ENCODE measurements at regions of chr5 and their contacts with region 1.

Region 1: DNA sequence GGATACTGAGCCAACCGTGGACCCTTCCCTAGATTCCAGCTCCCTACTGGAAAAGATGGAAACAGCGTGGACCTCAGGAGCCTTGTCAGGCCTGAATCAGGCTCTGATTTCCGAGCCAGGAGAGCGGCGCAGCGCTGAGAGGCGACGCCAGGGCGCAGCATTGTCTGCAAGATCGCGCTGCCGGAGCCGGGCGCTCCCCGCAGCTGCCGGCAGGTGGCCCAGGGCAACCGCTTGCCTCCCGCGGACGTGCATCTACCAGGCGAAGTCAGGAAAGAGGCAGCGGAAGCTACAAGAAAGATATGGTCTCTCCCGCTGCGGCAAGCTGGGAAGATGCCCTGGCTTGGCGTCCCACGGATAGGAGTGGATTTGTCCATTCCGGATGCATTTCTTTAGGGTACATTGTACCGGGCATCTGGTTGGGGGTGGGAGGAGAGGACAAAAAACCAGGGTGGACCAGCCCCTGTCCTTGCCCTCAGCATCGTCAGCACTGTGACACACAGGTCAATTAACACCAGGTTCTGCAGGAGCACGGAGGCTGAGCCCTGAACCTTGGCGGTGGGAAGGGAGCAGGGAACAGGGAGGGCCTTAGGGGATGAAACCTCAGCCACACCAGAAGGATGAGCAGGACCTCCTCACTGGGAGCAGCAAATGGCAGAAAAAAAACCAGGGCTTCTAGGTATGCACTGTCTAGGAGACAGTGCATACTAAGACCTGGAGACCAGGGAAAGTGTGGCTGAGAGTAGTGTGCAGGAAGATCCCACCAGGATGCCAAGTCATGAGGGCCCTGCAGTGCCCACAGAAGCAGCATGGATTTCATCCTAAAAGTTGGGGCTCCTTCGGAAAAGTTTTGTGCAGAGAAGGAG is 55.9 kb downstream of the SFXN1 start:
- DNase-seq: peak; percentile 77 to 82 (median 81)
- H3K4me3 ChIP-seq: peak overlapping the region in 1 of 2 donors; percentile 14
- H3K4me3 Mint-ChIP-seq: peak overlapping the region; percentile 65 to 77 (median 69)
- H3K27ac ChIP-seq: no peak overlapping the region
- H3K27ac Mint-ChIP-seq: peak overlapping the region in 6 of 7 donors; percentile 9 to 85 (median 46)
- H3K4me1 ChIP-seq: peaks cover 14% of the 10 kb centered on the region
- H3K4me1 Mint-ChIP-seq: peaks cover 9 to 24% (median 19%) of the 10 kb centered on the region in 4 donors
- H3K27me3 ChIP-seq: no peaks in the 10 kb centered on the region
- H3K27me3 Mint-ChIP-seq: no peaks in the 10 kb centered on the region

Region 2: DNA sequence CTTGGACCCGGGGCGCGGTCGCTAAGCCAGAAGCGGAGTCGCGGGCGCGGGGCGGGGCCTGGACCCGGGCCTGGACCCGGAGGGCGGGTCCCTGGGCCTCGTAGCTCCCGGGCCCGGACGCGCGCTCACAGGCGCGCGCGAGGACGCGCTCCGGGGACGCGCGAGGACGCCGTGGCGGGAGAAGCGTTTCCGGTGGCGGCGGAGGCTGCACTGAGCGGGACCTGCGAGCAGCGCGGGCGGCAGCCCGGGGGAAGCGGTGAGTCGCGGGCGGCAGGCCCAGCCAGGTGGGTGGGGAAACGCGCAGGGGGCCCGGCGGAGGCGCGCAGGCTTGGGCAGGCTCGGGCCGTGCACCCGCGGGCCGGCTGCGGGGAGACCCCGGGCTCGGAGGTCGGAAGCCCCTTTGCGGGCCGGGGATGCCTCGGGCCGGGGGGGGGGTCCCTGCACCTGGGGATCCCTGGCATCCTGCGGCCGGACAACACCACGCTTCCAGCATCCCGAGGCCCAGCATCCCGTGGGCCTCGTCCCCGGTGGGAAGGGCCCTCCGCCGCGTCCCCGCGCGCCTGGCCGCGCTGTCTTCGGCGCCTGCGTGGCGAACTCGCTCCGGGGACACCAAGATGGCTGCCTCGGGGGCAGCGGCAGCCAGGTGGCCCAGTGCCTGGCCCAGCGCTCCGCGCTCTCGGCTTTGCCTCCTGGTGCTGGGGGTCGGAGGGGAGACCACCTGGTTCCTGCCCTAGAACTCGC is 55.7 kb before region 1 on chr5 and contains the start of gene SFXN1:
- CTCF ChIA-PET with region 1: interaction called, 12 read pairs
- POLR2A ChIA-PET with region 1: interaction called, 3 read pairs
- intact Hi-C with region 1: no loop called
- DNase-seq: peak; percentile 69 to 80 (median 74)
- H3K4me3 ChIP-seq: peak within 1 kb of the TSS; percentile 65 to 84
- H3K4me3 Mint-ChIP-seq: peak within 1 kb of the TSS; percentile 92 to 98 (median 96)
- H3K27ac ChIP-seq: peak within 1 kb of the TSS; percentile 60
- H3K27ac Mint-ChIP-seq: peak within 1 kb of the TSS; percentile 89 to 98 (median 93)
- H3K4me1 ChIP-seq: peaks cover 47% of the 10 kb centered on the region
- H3K4me1 Mint-ChIP-seq: peaks cover 42 to 67% (median 52%) of the 10 kb centered on the region in 4 donors
- H3K27me3 ChIP-seq: no peaks in the 10 kb centered on the region
- H3K27me3 Mint-ChIP-seq: no peaks in the 10 kb centered on the region
- total RNA-seq, gene SFXN1: 99.2 to 111 TPM

Region 3: DNA sequence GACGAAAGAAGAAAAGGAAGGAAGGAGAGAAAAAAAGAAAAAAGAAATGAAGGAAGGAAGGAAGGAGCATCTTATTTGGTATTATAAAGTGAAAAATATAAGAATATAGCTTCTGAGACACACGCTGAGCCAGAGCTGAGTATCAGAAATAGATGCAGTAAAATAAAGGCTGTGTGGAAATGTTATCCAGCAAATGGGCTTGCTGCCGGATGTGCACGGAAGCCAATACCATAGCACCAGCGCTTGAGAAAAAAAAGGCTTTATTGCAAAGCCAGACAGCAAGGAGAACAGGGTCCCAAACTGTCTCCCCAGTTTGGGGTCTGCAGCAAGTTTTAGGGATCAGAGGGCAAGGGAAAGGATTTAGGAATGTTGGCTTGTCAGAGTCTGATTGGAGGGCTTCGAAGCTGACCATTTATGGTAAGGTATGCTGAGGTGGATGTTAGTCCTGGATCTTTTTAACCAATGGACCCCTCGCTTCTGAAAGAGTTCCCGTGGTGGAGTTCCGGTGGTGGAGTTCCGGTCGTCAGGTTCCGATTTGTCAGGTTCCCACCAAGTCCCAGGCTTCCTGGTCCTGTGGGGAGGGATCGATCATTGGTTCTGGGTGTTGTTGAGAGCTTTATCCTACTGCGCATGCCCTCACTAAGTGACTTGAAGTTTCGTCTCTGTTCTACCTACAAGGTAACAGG is 14.5 kb after region 1 on chr5:
- CTCF ChIA-PET with region 1: interaction called, 10 read pairs
- POLR2A ChIA-PET with region 1: no interaction called
- intact Hi-C with region 1: no loop called
- DNase-seq: no peak
- H3K4me3 ChIP-seq: no peak overlapping the region
- H3K4me3 Mint-ChIP-seq: no peak overlapping the region
- H3K27ac ChIP-seq: no peak overlapping the region
- H3K27ac Mint-ChIP-seq: no peak overlapping the region
- H3K4me1 ChIP-seq: no peaks in the 10 kb centered on the region
- H3K4me1 Mint-ChIP-seq: peaks cover 0 to 4% (median 0%) of the 10 kb centered on the region in 4 donors
- H3K27me3 ChIP-seq: no peaks in the 10 kb centered on the region
- H3K27me3 Mint-ChIP-seq: peaks cover 19 to 36% of the 10 kb centered on the region in 2 donors

Region 4: GRCh38 chr5:175657593-175658271 is 123.4 kb after region 1 on chr5 and contains the start of gene HRH2:
- CTCF ChIA-PET with region 1: interaction called, 17 read pairs
- POLR2A ChIA-PET with region 1: interaction called, 5 read pairs
- intact Hi-C with region 1: loop called (anchors 1 kb)
- DNase-seq: peak; percentile 33 to 47 (median 37)
- H3K4me3 ChIP-seq: peak within 1 kb of the TSS; percentile 73 to 82
- H3K4me3 Mint-ChIP-seq: peak within 1 kb of the TSS; percentile 91 to 97 (median 96)
- H3K27ac ChIP-seq: peak within 1 kb of the TSS; percentile 34
- H3K27ac Mint-ChIP-seq: peak within 1 kb of the TSS; percentile 61 to 95 (median 88)
- H3K4me1 ChIP-seq: peaks cover 74% of the 10 kb centered on the region
- H3K4me1 Mint-ChIP-seq: peaks cover 65 to 94% (median 79%) of the 10 kb centered on the region in 4 donors
- H3K27me3 ChIP-seq: no peaks in the 10 kb centered on the region
- H3K27me3 Mint-ChIP-seq: no peaks in the 10 kb centered on the region
- total RNA-seq, gene HRH2: 4.0 to 4.2 TPM

Region 5: GRCh38 chr5:175712681-175713085 is 178.4 kb after region 1 on chr5:
- CTCF ChIA-PET with region 1: interaction called, 100 read pairs
- POLR2A ChIA-PET with region 1: no interaction called
- intact Hi-C with region 1: no loop called
- DNase-seq: no peak
- H3K4me3 ChIP-seq: no peak overlapping the region
- H3K4me3 Mint-ChIP-seq: no peak overlapping the region
- H3K27ac ChIP-seq: no peak overlapping the region
- H3K27ac Mint-ChIP-seq: no peak overlapping the region
- H3K4me1 ChIP-seq: no peaks in the 10 kb centered on the region
- H3K4me1 Mint-ChIP-seq: peaks cover 0 to 3% (median 0%) of the 10 kb centered on the region in 4 donors
- H3K27me3 ChIP-seq: no peaks in the 10 kb centered on the region
- H3K27me3 Mint-ChIP-seq: no peaks in the 10 kb centered on the region

Region 6: GRCh38 chr5:176965633-176966032 is 1431.3 kb after region 1 on chr5:
- CTCF ChIA-PET with region 1: no interaction called
- POLR2A ChIA-PET with region 1: no interaction called
- intact Hi-C with region 1: no loop called
- DNase-seq: no peak
- H3K4me3 ChIP-seq: no peak overlapping the region
- H3K4me3 Mint-ChIP-seq: no peak overlapping the region
- H3K27ac ChIP-seq: no peak overlapping the region
- H3K27ac Mint-ChIP-seq: peak overlapping the region in 1 of 7 donors; percentile 68
- H3K4me1 ChIP-seq: no peaks in the 10 kb centered on the region
- H3K4me1 Mint-ChIP-seq: peaks cover 0 to 5% (median 3%) of the 10 kb centered on the region in 4 donors
- H3K27me3 ChIP-seq: no peaks in the 10 kb centered on the region
- H3K27me3 Mint-ChIP-seq: no peaks in the 10 kb centered on the region